CD14-positive monocyte (primary cell): ENCODE measurements at regions of chr14 and their contacts with region 1.

Region 1: GRCh38 chr14:31026395-31027118 is 378 bp upstream of the STRN3 start:
- DNase-seq: peak; percentile 95
- H3K4me3 ChIP-seq: peak overlapping the region; percentile 74 to 90 (median 90)
- H3K4me3 Mint-ChIP-seq: peak overlapping the region; percentile 100
- H3K27ac ChIP-seq: peak overlapping the region; percentile 85 to 95
- H3K27ac Mint-ChIP-seq: peak overlapping the region; percentile 98 to 100 (median 98)
- H3K4me1 ChIP-seq: peaks cover 23 to 36% of the 10 kb centered on the region in 2 donors
- H3K4me1 Mint-ChIP-seq: peaks cover 36% of the 10 kb centered on the region
- H3K27me3 ChIP-seq: no peaks in the 10 kb centered on the region
- H3K27me3 Mint-ChIP-seq: no peaks in the 10 kb centered on the region
- CTCF ChIP-seq: no peak

Region 2: GRCh38 chr14:31070431-31070830 is 43.9 kb after region 1 on chr14:
- intact Hi-C with region 1: loop called in 1 of 2 experiments (anchors 10 kb)
- DNase-seq: no peak
- H3K4me3 ChIP-seq: no peak overlapping the region
- H3K4me3 Mint-ChIP-seq: no peak overlapping the region
- H3K27ac ChIP-seq: no peak overlapping the region
- H3K27ac Mint-ChIP-seq: no peak overlapping the region
- H3K4me1 ChIP-seq: peaks cover 18 to 21% of the 10 kb centered on the region in 2 donors
- H3K4me1 Mint-ChIP-seq: peaks cover 17% of the 10 kb centered on the region
- H3K27me3 ChIP-seq: no peaks in the 10 kb centered on the region
- H3K27me3 Mint-ChIP-seq: peaks cover 0 to 1% (median 0%) of the 10 kb centered on the region in 3 donors
- CTCF ChIP-seq: no peak

Region 3: DNA sequence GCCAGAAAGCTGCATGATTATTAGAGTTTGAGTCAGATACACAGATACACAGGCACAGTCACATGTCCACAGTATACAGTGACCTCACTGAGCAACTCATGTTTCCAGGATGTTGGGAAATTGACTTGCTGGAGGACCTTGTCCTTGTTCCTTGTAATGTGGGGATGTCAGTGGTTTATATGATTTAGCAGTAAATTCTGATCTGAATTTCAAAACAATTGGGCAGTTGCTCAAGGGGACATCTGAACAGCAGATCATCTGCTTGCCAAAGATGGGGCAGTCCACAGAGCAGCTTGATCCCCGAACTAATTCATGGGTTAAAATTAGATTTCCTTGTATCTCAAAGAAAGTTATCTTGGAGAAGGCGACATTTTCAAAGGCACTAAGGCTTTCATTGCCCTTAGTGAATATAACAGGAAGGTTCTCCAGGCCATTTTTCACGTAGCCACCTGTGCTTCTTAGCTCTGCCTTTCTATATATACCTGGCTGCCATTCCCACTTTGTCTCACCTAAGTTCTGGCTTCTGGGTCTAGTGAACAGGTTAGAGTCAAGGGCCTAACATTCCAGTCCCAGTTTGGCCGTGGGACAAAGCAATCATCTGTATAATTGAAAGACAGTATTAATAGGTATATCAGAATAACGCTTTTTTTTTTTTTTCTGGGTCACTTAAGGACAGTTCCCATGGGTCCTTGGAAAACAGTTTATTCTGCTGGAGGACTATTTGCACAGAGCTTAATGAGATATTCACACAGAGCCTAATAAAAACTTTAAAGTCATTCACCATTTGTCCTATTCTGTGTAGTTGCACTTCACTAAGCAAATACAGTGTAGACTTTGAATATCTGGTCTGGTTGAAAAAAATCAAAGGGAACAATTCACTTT is 64.6 kb after region 1 on chr14:
- intact Hi-C with region 1: loop called in 1 of 2 experiments (anchors 5 kb)
- DNase-seq: peak; percentile 89 to 98 (median 97)
- H3K4me3 ChIP-seq: no peak overlapping the region
- H3K4me3 Mint-ChIP-seq: no peak overlapping the region
- H3K27ac ChIP-seq: peak overlapping the region; percentile 83 to 91
- H3K27ac Mint-ChIP-seq: peak overlapping the region; percentile 97 to 99 (median 99)
- H3K4me1 ChIP-seq: peaks cover 24 to 27% of the 10 kb centered on the region in 2 donors
- H3K4me1 Mint-ChIP-seq: peaks cover 23% of the 10 kb centered on the region
- H3K27me3 ChIP-seq: no peaks in the 10 kb centered on the region
- H3K27me3 Mint-ChIP-seq: peaks cover 0 to 4% (median 0%) of the 10 kb centered on the region in 3 donors
- CTCF ChIP-seq: no peak